A549 (cell line): ENCODE measurements at regions of chr2 and their contacts with region 1.

Region 1: GRCh38 chr2:236180831-236181453 is 12.8 kb upstream of the GBX2 start:
- DNase-seq: peak; percentile 80 to 87
- ATAC-seq: peak; percentile 14 to 40; a peak in 4 of 6 replicates
- H3K4me3 ChIP-seq: peak overlapping the region; percentile 70; the same call in 2 of the 3 replicates
- H3K27ac ChIP-seq: no peak overlapping the region
- H3K4me1 ChIP-seq: peaks cover 4% of the 10 kb centered on the region; the same call in 1 of the 3 replicates
- CTCF ChIP-seq: peak; percentile 95
- EP300 ChIP-seq: no peak
- POLR2A ChIP-seq: no peak
- RAD21 ChIP-seq: peak; percentile 87 to 89

Region 2: DNA sequence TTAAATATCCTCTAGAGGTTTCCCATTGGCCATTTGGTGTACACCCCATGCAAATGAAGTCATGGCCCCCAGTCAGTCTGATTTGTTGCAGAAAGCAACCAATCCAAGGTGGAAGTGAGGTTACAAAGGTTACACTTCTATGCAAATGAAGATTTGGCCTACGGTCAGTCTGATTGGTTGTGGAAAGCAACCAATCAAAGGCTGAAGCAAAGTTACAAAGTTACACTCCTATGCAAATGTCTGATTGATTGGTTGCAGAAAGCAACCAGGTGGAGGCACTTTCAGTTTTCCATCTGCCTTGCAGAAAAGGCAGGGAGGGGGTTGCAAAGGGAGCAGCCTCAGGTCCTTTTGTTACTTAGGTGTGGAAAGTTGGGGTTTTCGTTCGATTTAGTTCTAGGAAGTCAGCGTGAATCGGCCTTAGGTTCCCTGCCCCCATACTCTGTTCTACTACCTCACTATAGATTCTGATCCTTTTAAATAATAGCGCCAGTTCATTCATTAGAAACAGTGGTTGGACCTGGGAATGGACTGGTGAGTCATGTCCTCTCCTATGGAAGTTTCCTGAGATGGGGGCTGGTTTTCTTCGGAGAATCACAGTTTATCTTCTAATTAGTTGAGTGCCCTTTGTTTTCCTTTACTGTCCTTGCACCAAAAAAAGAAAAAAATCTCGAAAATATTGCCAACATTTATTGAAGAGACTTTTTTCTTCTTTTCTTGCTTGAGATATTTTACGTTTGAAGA is 407.6 kb before region 1 on chr2:
- CTCF ChIA-PET with region 1: interaction called, 222 read pairs
- POLR2A ChIA-PET with region 1: interaction called, 3 read pairs
- DNase-seq: no peak
- ATAC-seq: no peak
- H3K4me3 ChIP-seq: no peak overlapping the region
- H3K27ac ChIP-seq: no peak overlapping the region
- H3K4me1 ChIP-seq: no peaks in the 10 kb centered on the region
- CTCF ChIP-seq: no peak
- EP300 ChIP-seq: no peak
- POLR2A ChIP-seq: no peak
- RAD21 ChIP-seq: no peak

Region 3: DNA sequence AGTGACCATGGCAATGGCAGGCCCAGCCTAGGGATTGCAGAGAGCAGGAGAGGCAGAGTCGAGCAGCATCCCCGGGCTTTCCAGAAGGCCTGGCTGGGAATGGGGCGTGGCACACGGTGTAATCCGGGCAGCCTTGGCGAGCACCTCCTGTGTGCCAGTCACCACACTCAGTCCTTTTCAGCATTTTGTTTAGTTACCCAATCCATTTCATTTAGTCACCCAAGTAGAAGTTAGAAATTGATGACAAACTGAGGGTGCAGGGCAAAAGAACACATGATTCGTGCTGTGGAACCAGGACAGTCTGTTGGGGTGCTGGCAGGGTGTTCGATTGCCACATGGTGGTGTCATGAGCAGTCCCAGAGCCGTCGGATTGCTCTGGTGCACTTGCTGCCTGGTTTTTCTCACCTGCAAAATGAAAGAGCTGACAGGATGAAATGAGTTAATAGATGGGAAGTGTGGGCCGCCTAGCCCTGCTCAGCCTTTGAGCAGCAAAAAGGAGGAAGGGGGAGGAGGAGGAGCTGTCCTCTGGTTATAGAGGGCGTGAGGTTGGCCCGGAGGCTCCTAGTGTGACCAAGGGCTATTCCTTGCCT is 387.7 kb before region 1 on chr2:
- CTCF ChIA-PET with region 1: interaction called, 25 read pairs
- POLR2A ChIA-PET with region 1: no interaction called
- DNase-seq: peak; percentile 6 to 25
- ATAC-seq: peak; percentile 83 to 91
- H3K4me3 ChIP-seq: no peak overlapping the region
- H3K27ac ChIP-seq: no peak overlapping the region
- H3K4me1 ChIP-seq: no peaks in the 10 kb centered on the region
- CTCF ChIP-seq: peak; percentile 41
- EP300 ChIP-seq: no peak
- POLR2A ChIP-seq: no peak
- RAD21 ChIP-seq: 0 out of 5 replicates have a peak, but pooled peaks of 1 of the 2 experiments have one; percentile 23

Region 4: GRCh38 chr2:236168110-236169067 is 12.6 kb before region 1 on chr2 and contains the start of gene GBX2:
- CTCF ChIA-PET with region 1: interaction called, 28 read pairs
- POLR2A ChIA-PET with region 1: interaction called, 10 read pairs
- DNase-seq: peak; percentile 89 to 94
- ATAC-seq: peak; percentile 87 to 92
- H3K4me3 ChIP-seq: peak within 1 kb of the TSS; percentile 73
- H3K27ac ChIP-seq: peak within 1 kb of the TSS; percentile 79 to 92
- H3K4me1 ChIP-seq: peaks cover 9% of the 10 kb centered on the region; the same call in 2 of the 3 replicates
- CTCF ChIP-seq: no peak
- EP300 ChIP-seq: no peak
- POLR2A ChIP-seq: peak; percentile 81
- RAD21 ChIP-seq: peak in 1 of 2 experiments; percentile 52; a peak in 3 of 5 replicates
- polyA plus RNA-seq, gene GBX2: 0.85 and 1.2 TPM in 2 replicates

Region 5: DNA sequence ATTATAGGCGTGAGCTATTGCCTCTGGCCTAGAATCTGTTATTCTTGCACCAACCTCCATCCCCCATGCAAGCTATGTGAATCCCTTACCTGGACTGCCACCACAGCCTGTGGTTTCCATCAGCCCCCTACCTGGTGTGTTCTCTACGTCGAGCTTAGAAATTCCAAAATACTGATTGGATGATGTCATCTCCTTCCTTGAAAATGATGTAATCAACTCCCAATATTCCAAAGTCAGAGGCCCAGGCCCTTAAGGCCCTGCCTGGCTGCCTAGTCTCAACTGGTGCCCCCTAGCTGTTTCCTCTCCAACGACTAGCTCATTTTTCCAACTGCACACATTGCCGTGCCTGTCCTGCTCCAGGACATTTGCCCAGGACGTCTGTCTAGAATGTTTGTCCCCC is 28.6 kb after region 1 on chr2:
- CTCF ChIA-PET with region 1: interaction called, 13 read pairs
- POLR2A ChIA-PET with region 1: no interaction called
- DNase-seq: no peak
- ATAC-seq: no peak
- H3K4me3 ChIP-seq: no peak overlapping the region
- H3K27ac ChIP-seq: peak overlapping the region in 1 of 2 experiments; percentile 19; a peak in 1 of 6 replicates
- H3K4me1 ChIP-seq: peaks cover 4% of the 10 kb centered on the region; the same call in 1 of the 3 replicates
- CTCF ChIP-seq: no peak
- EP300 ChIP-seq: no peak
- POLR2A ChIP-seq: no peak
- RAD21 ChIP-seq: no peak